ENCODE measurements at regions of chr11 and their contacts with region 1.

Region 1: DNA sequence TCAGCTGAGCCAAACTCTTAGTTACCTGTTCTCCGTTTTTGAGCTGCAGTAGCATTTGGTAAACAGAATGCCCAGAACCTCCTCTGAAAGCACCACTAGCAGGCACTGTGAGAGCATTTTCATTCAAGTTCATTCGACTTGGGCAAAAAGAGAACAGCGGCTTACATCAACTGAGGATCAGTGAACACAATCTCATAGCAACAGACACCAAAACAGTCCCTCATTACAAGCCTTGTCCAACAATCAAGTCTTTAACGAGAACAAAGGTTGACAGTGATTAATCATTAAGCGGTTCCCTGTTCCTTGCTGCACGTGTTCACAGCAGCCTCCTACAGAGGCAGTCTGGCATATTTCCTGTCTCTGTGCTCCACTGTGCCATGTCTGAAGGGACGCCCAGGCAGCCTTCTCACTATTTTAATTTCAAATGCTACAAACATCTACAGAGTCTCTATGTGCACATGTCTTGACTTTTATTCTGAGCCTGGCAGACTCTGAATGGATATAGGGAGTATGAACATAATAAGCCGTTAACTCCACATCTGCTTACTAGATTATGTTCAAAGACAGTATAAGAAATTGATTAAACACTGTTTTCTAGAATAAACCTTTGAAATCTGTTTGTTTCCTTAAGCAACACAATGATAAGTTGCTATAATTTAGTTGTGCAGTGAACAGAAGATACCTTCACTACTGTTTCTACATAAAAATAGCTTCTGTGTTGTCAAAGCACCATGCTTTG is 88.3 kb upstream of the MTMR2 start:
- DNase-seq: peak; percentile 21
- ATAC-seq: peak; percentile 91
- H3K4me3 Mint-ChIP-seq: peak overlapping the region; percentile 46
- H3K27ac Mint-ChIP-seq: peak overlapping the region; percentile 85
- H3K4me1 Mint-ChIP-seq: peaks cover 44% of the 10 kb centered on the region
- H3K27me3 Mint-ChIP-seq: no peaks in the 10 kb centered on the region
- CTCF ChIP-seq: no peak

Region 2: DNA sequence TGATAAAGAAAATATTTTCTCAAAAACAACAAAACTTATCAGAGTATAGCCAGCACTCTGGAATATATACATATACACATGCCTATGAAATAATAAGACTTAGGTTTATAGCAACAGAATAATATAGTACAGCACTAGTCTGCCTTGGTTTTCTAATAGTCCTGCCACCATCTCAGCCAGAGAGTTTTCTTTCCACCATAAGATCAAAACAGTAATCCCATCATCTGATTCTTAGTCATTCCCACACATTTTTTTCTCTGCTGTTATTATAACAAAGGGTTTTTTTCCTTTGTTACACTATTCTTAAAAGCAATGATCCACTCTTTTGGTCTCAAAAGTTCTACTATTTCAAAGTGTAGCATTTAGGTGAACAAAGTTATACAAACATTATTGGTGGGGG is 103.4 kb before region 1 on chr11:
- CTCF ChIA-PET with region 1: no interaction called
- POLR2A ChIA-PET with region 1: no interaction called
- intact Hi-C with region 1: no loop called
- DNase-seq: no peak
- ATAC-seq: no peak
- H3K4me3 Mint-ChIP-seq: no peak overlapping the region
- H3K27ac Mint-ChIP-seq: no peak overlapping the region
- H3K4me1 Mint-ChIP-seq: peaks cover 9% of the 10 kb centered on the region
- H3K27me3 Mint-ChIP-seq: no peaks in the 10 kb centered on the region
- CTCF ChIP-seq: no peak

Region 3: DNA sequence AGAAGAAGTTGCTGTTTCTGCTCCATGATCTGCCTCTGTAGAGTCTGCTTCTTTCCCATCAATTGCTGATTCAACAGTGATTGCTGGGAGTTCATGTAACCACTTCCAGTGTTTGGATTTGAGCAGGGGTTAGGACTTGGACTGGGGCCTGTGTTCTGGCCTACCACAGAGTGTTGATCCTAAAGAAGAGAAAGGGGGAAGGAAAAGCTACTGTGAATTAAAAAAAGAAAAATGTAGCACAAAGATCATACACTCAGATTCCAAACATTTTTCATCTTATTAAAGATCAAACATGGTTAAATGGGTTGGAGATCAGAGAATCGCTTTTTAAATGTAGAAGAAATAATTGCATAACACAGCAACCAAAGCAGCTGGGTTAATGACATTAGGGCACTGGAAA is 20.7 kb before region 1 on chr11:
- CTCF ChIA-PET with region 1: no interaction called
- POLR2A ChIA-PET with region 1: no interaction called
- intact Hi-C with region 1: no loop called
- DNase-seq: no peak
- ATAC-seq: no peak
- H3K4me3 Mint-ChIP-seq: no peak overlapping the region
- H3K27ac Mint-ChIP-seq: no peak overlapping the region
- H3K4me1 Mint-ChIP-seq: no peaks in the 10 kb centered on the region
- H3K27me3 Mint-ChIP-seq: no peaks in the 10 kb centered on the region
- CTCF ChIP-seq: no peak

Region 4: DNA sequence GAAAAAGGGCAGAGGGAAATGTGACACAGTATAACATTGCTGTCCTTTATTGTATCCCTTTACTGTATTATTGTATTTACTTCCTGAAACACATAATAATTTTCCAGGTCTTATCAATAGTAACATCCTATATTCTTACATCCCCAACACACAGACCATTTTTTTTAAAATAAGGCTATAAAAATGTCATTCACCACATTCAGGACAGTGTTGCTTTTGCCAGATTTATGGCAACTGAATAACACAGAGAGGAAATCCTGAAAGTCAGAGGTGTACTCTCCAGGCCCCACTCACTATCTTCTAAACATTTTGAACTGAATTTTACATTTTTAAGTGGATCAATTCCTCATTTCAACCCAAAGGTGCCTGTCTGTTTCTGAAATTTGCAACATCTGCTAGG is 16.5 kb after region 1 on chr11:
- CTCF ChIA-PET with region 1: no interaction called
- POLR2A ChIA-PET with region 1: no interaction called
- intact Hi-C with region 1: loop called (anchors 2 kb)
- DNase-seq: no peak
- ATAC-seq: no peak
- H3K4me3 Mint-ChIP-seq: no peak overlapping the region
- H3K27ac Mint-ChIP-seq: no peak overlapping the region
- H3K4me1 Mint-ChIP-seq: peaks cover 9% of the 10 kb centered on the region
- H3K27me3 Mint-ChIP-seq: no peaks in the 10 kb centered on the region
- CTCF ChIP-seq: no peak

Region 5: DNA sequence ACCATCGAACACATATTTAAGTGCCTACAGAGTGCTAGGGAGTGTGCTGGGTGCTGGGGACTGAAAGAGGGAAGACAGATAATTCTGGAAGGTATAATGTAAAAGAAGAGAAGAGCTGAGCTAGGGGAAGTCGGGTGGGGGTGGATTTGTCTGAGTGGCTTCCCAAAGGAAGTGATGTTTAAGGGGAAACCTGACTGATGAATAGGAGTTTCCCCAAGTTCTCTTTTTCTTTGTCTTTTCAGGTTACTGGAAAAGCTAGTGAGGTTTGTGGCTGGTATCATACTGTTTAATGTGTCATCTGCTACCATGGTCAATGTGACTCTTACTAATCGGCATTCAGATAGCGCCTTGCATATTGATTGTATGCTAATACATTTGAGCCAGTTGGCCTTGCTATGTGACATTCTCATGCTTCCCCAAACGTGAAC is 63.3 kb after region 1 on chr11:
- CTCF ChIA-PET with region 1: no interaction called
- POLR2A ChIA-PET with region 1: no interaction called
- intact Hi-C with region 1: loop called (anchors 1 kb)
- DNase-seq: no peak
- ATAC-seq: peak; percentile 81
- H3K4me3 Mint-ChIP-seq: peak overlapping the region; percentile 66
- H3K27ac Mint-ChIP-seq: peak overlapping the region; percentile 83
- H3K4me1 Mint-ChIP-seq: peaks cover 44% of the 10 kb centered on the region
- H3K27me3 Mint-ChIP-seq: no peaks in the 10 kb centered on the region
- CTCF ChIP-seq: no peak

Region 6: GRCh38 chr11:96134602-96135001 is 122.3 kb after region 1 on chr11:
- CTCF ChIA-PET with region 1: no interaction called
- POLR2A ChIA-PET with region 1: no interaction called
- intact Hi-C with region 1: no loop called
- DNase-seq: no peak
- ATAC-seq: peak; percentile 69
- H3K4me3 Mint-ChIP-seq: no peak overlapping the region
- H3K27ac Mint-ChIP-seq: peak overlapping the region; percentile 73
- H3K4me1 Mint-ChIP-seq: peaks cover 47% of the 10 kb centered on the region
- H3K27me3 Mint-ChIP-seq: no peaks in the 10 kb centered on the region
- CTCF ChIP-seq: no peak

Measured in activated B cell treated with CpG ODN at 0.5 μM for 24 hours (primary cell).